ENCODE measurements at regions of chr10 and their contacts with region 1.

Region 1: GRCh38 chr10:89029785-89030437 is 39.3 kb downstream of the FAS start:
- DNase-seq: peak in 1 of 2 experiments; percentile 42
- H3K4me3 ChIP-seq: no peak overlapping the region
- H3K27ac ChIP-seq: no peak overlapping the region
- H3K4me1 ChIP-seq: peaks cover 40% of the 10 kb centered on the region
- H3K27me3 ChIP-seq: no peaks in the 10 kb centered on the region
- CTCF ChIP-seq: peak; percentile 79

Region 2: GRCh38 chr10:88810196-88810961 is 219.5 kb before region 1 on chr10:
- CTCF ChIA-PET with region 1: no interaction called
- POLR2A ChIA-PET with region 1: no interaction called
- intact Hi-C with region 1: no loop called
- DNase-seq: peak; percentile 22 to 60
- H3K4me3 ChIP-seq: no peak overlapping the region
- H3K27ac ChIP-seq: no peak overlapping the region
- H3K4me1 ChIP-seq: no peaks in the 10 kb centered on the region; the same call in 1 of the 2 replicates
- H3K27me3 ChIP-seq: no peaks in the 10 kb centered on the region
- CTCF ChIP-seq: peak; percentile 70

Region 3: GRCh38 chr10:88990384-88991160 is 39.3 kb before region 1 on chr10 and contains the start of gene FAS:
- CTCF ChIA-PET with region 1: interaction called, 3 read pairs
- POLR2A ChIA-PET with region 1: interaction called, 5 read pairs
- intact Hi-C with region 1: loop called (anchors 5 kb)
- DNase-seq: peak; percentile 67 to 71
- H3K4me3 ChIP-seq: peak within 1 kb of the TSS; percentile 85
- H3K27ac ChIP-seq: peak within 1 kb of the TSS; percentile 42
- H3K4me1 ChIP-seq: peaks cover 26% of the 10 kb centered on the region
- H3K27me3 ChIP-seq: no peaks in the 10 kb centered on the region
- CTCF ChIP-seq: no peak
- total RNA-seq, gene FAS: 7.6 and 8.5 TPM in 2 replicates

Region 4: GRCh38 chr10:89001024-89001728 is 28.7 kb before region 1 on chr10:
- CTCF ChIA-PET with region 1: no interaction called
- POLR2A ChIA-PET with region 1: no interaction called
- intact Hi-C with region 1: no loop called
- DNase-seq: no peak
- H3K4me3 ChIP-seq: no peak overlapping the region
- H3K27ac ChIP-seq: no peak overlapping the region
- H3K4me1 ChIP-seq: no peaks in the 10 kb centered on the region
- H3K27me3 ChIP-seq: no peaks in the 10 kb centered on the region
- CTCF ChIP-seq: no peak

Region 5: GRCh38 chr10:89414146-89414878 is 384.4 kb after region 1 on chr10 and contains the start of gene IFIT5:
- CTCF ChIA-PET with region 1: no interaction called
- POLR2A ChIA-PET with region 1: no interaction called
- intact Hi-C with region 1: loop called (anchors 10 kb)
- DNase-seq: peak in 1 of 2 experiments; percentile 47
- H3K4me3 ChIP-seq: peak within 1 kb of the TSS; percentile 90
- H3K27ac ChIP-seq: peak within 1 kb of the TSS; percentile 83
- H3K4me1 ChIP-seq: peaks cover 8% of the 10 kb centered on the region; the same call in 1 of the 2 replicates
- H3K27me3 ChIP-seq: no peaks in the 10 kb centered on the region
- CTCF ChIP-seq: no peak
- total RNA-seq, gene IFIT5: 1.9 and 2.1 TPM in 2 replicates

Measured in PC-9 (cell line).